Activated CD8-positive, alpha-beta T cell treated with anti-CD3 and anti-CD28 coated beads, Interleukin-2, amount 10 ng/mL, durations not matched to agents 7 days and 5 days (primary cell): ENCODE measurements at regions of chr3 and their contacts with region 1.

Region 1: DNA sequence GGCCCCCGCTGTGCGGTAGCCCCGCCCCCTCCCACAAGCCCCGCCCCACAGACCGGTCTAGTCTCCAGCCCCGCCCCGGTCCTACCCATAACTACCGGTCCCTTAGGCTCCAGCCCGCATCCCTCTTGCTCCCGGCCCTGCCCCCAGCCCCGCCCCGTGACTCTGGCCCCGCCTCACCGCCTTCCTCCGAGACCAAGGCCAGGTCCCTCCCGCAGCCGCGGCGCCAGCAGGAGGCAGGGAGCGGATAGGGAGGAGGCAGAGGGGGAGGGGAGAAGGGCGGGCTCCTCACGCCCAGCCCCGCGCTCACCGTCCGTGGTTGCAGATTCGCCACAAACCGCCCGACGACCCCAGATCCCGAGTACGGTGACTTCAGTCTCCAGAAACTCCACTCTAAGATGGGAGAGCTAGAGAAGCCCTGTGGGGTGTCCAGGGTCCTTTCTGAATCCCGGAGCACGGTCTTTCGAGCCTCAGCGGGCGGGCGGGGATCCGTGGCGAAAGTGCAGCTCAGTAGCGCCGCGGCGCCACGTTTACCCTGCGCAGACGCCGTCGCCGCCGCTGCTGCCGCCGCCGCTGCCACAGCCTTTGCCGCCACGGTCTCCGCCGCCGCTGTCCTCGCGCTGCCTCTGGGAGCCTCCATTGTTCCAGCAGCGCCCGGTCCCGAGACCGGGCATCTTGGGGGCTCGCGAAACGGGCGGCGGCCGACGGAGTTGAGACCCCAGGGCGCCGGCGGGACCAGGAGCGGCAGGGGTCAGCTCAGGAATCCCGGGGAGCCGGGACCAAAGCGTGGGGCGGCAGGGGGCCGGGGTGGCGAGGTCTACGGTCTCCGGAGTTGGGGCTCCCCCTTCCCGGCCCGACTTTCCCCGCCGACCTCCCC is at the start of gene BRPF1:
- DNase-seq: peak; percentile 100
- ATAC-seq: peak; percentile 97
- H3K4me3 Mint-ChIP-seq: peak within 1 kb of the TSS; percentile 99
- H3K27ac Mint-ChIP-seq: peak within 1 kb of the TSS; percentile 97
- H3K4me1 Mint-ChIP-seq: peaks cover 67% of the 10 kb centered on the region
- H3K27me3 Mint-ChIP-seq: no peaks in the 10 kb centered on the region
- total RNA-seq, gene BRPF1: 54.7 to 57.4 TPM

Region 2: DNA sequence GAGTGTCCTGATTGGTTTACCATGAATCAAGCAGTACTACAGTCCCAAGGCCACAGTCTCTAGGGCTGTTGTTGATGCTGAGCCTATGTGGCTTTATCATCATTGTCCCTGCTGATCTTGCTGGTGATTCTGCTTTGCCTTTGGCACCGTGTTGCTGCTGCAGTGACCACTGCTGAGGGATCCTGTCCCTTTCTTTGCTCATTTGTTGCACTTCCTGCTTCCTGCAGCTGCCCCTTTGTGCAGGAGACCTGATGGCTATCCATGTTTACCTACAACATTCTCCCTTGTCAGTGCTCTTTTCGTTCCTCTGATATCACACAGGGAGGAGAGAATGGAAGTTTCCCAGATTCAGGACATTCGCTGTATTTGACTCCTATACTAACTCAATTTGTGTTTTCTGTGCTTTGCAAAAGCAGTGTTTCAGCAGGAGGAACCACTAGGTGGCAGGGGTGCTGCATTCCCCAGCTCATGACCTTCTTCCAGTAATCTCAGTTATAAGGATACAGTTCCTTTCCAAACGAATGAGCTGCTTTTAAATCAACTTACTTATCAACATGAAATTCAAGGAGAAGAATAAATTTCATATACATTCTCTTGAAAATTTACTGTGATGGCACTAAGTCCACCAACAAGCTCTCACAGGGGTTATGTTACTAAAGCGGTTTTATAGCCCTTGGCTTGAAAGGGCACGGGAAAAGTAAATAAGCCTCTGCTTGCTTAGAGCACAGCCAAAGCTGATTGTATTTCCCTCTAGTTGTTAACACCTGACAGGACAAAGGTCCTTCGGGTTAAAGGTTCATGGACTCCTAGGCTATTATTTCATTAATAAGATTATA is 378.3 kb before region 1 on chr3:
- CTCF ChIA-PET with region 1: interaction called, 10 read pairs
- POLR2A ChIA-PET with region 1: no interaction called
- DNase-seq: peak; percentile 73
- ATAC-seq: peak; percentile 81
- H3K4me3 Mint-ChIP-seq: no peak overlapping the region
- H3K27ac Mint-ChIP-seq: peak overlapping the region; percentile 43
- H3K4me1 Mint-ChIP-seq: peaks cover 22% of the 10 kb centered on the region
- H3K27me3 Mint-ChIP-seq: no peaks in the 10 kb centered on the region

Region 3: DNA sequence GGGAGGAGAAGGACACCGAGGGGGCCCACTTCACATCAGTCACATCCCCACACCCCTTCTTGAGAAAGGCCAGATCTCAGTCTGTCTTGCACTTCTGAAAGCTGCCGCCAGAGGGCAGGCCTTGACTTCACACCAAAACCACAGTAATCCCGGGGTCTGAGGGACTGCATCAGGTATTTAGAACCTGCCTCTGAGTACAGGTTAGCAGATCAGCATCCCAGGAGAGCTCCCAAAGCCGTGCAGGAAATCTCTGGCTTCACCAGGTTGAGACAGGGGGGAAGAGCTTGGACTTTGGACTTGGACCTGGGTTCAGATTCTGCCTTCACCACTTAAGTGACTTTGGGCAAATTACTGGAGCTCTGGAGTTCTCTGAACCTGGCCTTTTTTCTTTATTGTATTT is 228.2 kb before region 1 on chr3:
- CTCF ChIA-PET with region 1: interaction called, 30 read pairs
- POLR2A ChIA-PET with region 1: no interaction called
- DNase-seq: peak; percentile 82
- ATAC-seq: peak; percentile 57
- H3K4me3 Mint-ChIP-seq: no peak overlapping the region
- H3K27ac Mint-ChIP-seq: no peak overlapping the region
- H3K4me1 Mint-ChIP-seq: peaks cover 3% of the 10 kb centered on the region
- H3K27me3 Mint-ChIP-seq: peaks cover 26% of the 10 kb centered on the region

Region 4: GRCh38 chr3:9649791-9650521 is 81.5 kb before region 1 on chr3:
- CTCF ChIA-PET with region 1: interaction called, 4 read pairs
- POLR2A ChIA-PET with region 1: interaction called, 11 read pairs
- DNase-seq: peak; percentile 25
- ATAC-seq: peak; percentile 4
- H3K4me3 Mint-ChIP-seq: peak overlapping the region; percentile 96
- H3K27ac Mint-ChIP-seq: peak overlapping the region; percentile 94
- H3K4me1 Mint-ChIP-seq: peaks cover 20% of the 10 kb centered on the region
- H3K27me3 Mint-ChIP-seq: no peaks in the 10 kb centered on the region

Region 5: GRCh38 chr3:9715764-9716437 is 15.5 kb before region 1 on chr3:
- CTCF ChIA-PET with region 1: interaction called, 11 read pairs
- POLR2A ChIA-PET with region 1: no interaction called
- DNase-seq: no peak
- ATAC-seq: peak; percentile 61
- H3K4me3 Mint-ChIP-seq: no peak overlapping the region
- H3K27ac Mint-ChIP-seq: no peak overlapping the region
- H3K4me1 Mint-ChIP-seq: no peaks in the 10 kb centered on the region
- H3K27me3 Mint-ChIP-seq: peaks cover 8% of the 10 kb centered on the region

Region 6: GRCh38 chr3:9749645-9750555 is 18.5 kb after region 1 on chr3 and contains the start of gene OGG1:
- CTCF ChIA-PET with region 1: interaction called, 9 read pairs
- POLR2A ChIA-PET with region 1: interaction called, 29 read pairs
- DNase-seq: peak; percentile 99
- ATAC-seq: peak; percentile 94
- H3K4me3 Mint-ChIP-seq: peak within 1 kb of the TSS; percentile 98
- H3K27ac Mint-ChIP-seq: peak within 1 kb of the TSS; percentile 95
- H3K4me1 Mint-ChIP-seq: peaks cover 74% of the 10 kb centered on the region
- H3K27me3 Mint-ChIP-seq: no peaks in the 10 kb centered on the region
- total RNA-seq, gene OGG1: 36.9 to 37.7 TPM

Region 7: DNA sequence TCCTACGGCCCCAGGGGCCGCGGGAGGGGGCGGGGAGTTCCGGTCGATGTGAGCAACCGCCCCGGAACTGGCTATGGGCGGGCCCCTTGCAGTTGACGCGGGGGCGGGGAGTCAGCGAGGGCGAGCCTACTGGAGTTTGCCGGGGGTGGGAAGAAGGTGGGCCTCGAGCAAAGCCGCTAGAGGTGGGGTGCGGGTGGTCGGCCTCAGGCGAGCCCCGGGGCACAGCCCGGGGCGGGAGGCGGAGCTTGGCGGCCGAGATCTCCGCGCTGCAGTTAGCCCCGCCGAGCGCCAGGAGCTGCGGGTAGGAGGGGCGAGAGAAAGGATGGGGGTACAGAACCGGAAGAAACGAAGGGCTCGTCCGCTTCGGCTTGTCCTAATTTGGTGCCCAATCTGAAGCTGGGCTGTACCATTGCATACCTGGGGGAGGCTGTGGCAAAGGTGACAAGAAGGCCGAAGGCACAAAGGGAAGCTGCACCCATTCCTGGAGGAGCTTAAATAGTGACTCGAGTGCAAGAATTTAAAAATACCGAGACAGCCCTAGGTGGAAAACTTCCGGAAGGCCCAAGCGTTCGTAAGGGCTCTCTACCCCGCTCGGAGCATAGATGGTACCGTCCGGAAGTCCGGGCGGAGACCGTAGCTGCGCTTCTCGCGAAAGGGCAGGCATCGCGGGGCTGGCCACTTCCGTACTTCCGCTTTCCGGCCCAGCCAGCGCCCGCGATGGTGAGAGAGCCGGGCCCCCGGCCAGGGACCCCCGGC is 61.1 kb after region 1 on chr3 and contains the starts of genes ARPC4 and TADA3:
- CTCF ChIA-PET with region 1: interaction called, 14 read pairs
- POLR2A ChIA-PET with region 1: interaction called, 33 read pairs
- DNase-seq: peak; percentile 96
- ATAC-seq: peak; percentile 92
- H3K4me3 Mint-ChIP-seq: peak within 1 kb of the TSS; percentile 96
- H3K27ac Mint-ChIP-seq: peak within 1 kb of the TSS; percentile 100
- H3K4me1 Mint-ChIP-seq: peaks cover 53% of the 10 kb centered on the region
- H3K27me3 Mint-ChIP-seq: no peaks in the 10 kb centered on the region
- total RNA-seq, gene ARPC4: 317 to 321 TPM
- total RNA-seq, gene TADA3: 83.2 to 85.6 TPM